Panc1 (cell line): ENCODE measurements at regions of chr12 and their contacts with region 1.

Region 1: GRCh38 chr12:91382081-91382543 is 199.5 kb upstream of the DCN start:
- DNase-seq: peak; percentile 53
- ATAC-seq: peak; percentile 82
- H3K4me3 ChIP-seq: peak overlapping the region; percentile 21 to 35
- H3K27ac ChIP-seq: no peak overlapping the region
- H3K4me1 ChIP-seq: peaks cover 3% of the 10 kb centered on the region; the same call in 1 of the 2 replicates
- H3K27me3 ChIP-seq: 0 out of 2 replicates have a peak, but pooled peaks cover 6% of the 10 kb centered on the region
- CTCF ChIP-seq: peak; percentile 88

Region 2: GRCh38 chr12:91094032-91094662 is 288.0 kb before region 1 on chr12:
- CTCF ChIA-PET with region 1: no interaction called
- POLR2A ChIA-PET with region 1: no interaction called
- in situ Hi-C with region 1: no loop called
- intact Hi-C with region 1: no loop called
- DNase-seq: no peak
- ATAC-seq: no peak
- H3K4me3 ChIP-seq: no peak overlapping the region
- H3K27ac ChIP-seq: no peak overlapping the region
- H3K4me1 ChIP-seq: no peaks in the 10 kb centered on the region
- H3K27me3 ChIP-seq: no peaks in the 10 kb centered on the region
- CTCF ChIP-seq: no peak

Region 3: DNA sequence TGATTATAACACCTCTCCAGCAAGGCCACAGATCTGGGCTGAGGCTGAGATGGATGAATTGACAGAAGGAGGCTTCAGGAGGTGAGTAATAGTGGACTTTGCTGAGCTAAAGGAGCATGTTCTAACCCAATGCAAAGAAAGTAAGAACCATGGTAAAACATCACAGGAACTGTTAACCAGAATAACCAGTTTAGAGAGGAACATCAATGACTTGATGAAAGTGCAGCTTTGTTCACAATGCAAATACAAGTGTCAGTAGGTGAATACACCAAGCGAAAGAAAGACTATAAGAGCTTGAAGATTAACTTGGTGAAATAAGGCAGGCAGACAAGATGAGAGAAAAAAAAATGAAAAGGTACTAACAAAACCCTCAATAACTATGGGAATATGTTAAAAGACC is 86.8 kb before region 1 on chr12:
- CTCF ChIA-PET with region 1: no interaction called
- POLR2A ChIA-PET with region 1: no interaction called
- in situ Hi-C with region 1: no loop called
- intact Hi-C with region 1: no loop called
- DNase-seq: no peak
- ATAC-seq: no peak
- H3K4me3 ChIP-seq: no peak overlapping the region
- H3K27ac ChIP-seq: no peak overlapping the region
- H3K4me1 ChIP-seq: no peaks in the 10 kb centered on the region
- H3K27me3 ChIP-seq: no peaks in the 10 kb centered on the region
- CTCF ChIP-seq: no peak

Region 4: DNA sequence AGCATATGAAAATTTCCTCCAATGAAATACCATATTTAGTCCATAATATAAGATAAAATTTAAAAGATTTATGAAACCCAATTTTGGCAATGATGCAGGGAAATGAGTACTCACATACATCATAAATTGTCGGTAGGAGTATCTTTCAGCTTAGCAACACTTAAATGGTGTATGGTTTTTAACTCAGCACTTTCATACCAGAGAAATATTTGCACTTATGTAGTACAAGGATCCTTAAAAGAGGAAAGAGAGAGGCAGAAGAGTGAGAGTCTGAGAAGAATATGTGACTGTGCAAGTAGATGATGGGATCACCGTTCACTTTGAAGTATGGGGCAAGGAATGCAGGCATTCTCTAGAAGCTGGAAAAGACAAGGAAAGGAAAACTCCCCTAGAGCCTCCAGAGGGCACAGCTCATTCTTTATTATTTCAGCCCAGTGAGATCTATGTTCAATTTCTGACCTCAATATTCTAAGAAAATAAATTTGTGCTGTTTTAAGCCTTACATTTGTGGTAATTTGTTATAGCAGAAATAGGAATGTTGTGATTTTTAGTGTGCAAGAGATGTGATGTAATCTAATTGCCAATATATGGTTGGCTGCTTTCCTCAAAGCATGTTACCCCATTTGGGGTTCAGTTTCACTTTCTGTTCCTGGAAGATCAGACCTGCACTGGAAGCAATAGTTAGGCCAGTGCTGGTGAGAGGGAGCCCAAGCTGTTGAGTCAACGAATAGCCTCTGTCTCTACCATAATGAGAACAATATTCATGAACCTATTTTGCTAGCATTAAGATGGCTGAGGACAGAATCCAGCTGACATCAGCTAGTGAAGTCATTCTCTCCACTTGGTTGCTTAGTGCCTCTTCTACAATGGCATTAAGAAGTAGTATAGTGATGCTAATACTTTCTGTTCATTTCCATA is 180.1 kb after region 1 on chr12:
- CTCF ChIA-PET with region 1: no interaction called
- POLR2A ChIA-PET with region 1: no interaction called
- in situ Hi-C with region 1: no loop called
- intact Hi-C with region 1: loop called (anchors 10 kb)
- DNase-seq: no peak
- ATAC-seq: no peak
- H3K4me3 ChIP-seq: no peak overlapping the region
- H3K27ac ChIP-seq: no peak overlapping the region
- H3K4me1 ChIP-seq: no peaks in the 10 kb centered on the region
- H3K27me3 ChIP-seq: no peaks in the 10 kb centered on the region
- CTCF ChIP-seq: peak; percentile 13; the same call in 1 of the 2 replicates

Region 5: GRCh38 chr12:92145731-92146496 is 763.8 kb after region 1 on chr12 and contains the start of gene BTG1:
- CTCF ChIA-PET with region 1: interaction called, 9 read pairs
- POLR2A ChIA-PET with region 1: no interaction called
- in situ Hi-C with region 1: no loop called
- intact Hi-C with region 1: loop called (anchors 1 kb)
- DNase-seq: peak; percentile 98
- ATAC-seq: peak; percentile 90
- H3K4me3 ChIP-seq: peak within 1 kb of the TSS; percentile 78 to 86
- H3K27ac ChIP-seq: peak within 1 kb of the TSS; percentile 85
- H3K4me1 ChIP-seq: peaks cover 27% of the 10 kb centered on the region
- H3K27me3 ChIP-seq: no peaks in the 10 kb centered on the region
- CTCF ChIP-seq: no peak
- total RNA-seq, gene BTG1: 50.0 TPM

Region 6: DNA sequence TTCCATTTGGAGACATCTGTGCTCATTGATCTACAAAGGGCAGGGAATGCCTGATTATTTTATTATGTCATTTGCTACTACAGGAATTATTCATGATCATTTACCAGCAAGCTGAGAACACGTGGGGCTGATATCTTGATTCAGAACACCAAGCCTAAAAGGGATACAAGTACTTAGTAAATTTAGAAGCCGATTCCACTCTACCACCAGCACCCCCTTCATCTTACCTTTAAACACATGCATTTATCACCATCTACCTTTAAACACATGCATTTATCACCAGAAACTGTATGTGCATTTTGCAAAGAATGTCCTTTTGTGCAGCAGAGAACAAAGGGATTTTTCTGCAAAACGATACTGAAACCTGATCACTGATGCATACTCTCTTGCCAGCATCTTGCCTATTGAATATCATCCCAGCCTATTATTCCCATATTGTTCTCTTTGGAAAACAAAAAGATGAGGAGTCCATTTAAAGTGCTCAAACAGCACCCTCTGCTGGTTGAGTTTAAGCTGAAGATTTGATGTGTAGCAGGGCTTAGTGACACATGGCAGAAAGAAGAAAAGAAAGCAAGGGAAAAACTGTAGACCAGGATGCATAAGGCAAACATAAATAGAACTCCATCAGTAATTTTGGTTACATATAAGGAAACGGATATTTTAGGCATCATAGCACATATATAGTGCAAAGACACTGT is 1188.1 kb after region 1 on chr12:
- CTCF ChIA-PET with region 1: interaction called, 3 read pairs
- POLR2A ChIA-PET with region 1: no interaction called
- in situ Hi-C with region 1: no loop called
- intact Hi-C with region 1: loop called (anchors 1 kb)
- DNase-seq: peak; percentile 41
- ATAC-seq: peak; percentile 80
- H3K4me3 ChIP-seq: no peak overlapping the region
- H3K27ac ChIP-seq: no peak overlapping the region
- H3K4me1 ChIP-seq: no peaks in the 10 kb centered on the region
- H3K27me3 ChIP-seq: 0 out of 2 replicates have a peak, but pooled peaks cover 2% of the 10 kb centered on the region
- CTCF ChIP-seq: peak; percentile 70

Region 7: DNA sequence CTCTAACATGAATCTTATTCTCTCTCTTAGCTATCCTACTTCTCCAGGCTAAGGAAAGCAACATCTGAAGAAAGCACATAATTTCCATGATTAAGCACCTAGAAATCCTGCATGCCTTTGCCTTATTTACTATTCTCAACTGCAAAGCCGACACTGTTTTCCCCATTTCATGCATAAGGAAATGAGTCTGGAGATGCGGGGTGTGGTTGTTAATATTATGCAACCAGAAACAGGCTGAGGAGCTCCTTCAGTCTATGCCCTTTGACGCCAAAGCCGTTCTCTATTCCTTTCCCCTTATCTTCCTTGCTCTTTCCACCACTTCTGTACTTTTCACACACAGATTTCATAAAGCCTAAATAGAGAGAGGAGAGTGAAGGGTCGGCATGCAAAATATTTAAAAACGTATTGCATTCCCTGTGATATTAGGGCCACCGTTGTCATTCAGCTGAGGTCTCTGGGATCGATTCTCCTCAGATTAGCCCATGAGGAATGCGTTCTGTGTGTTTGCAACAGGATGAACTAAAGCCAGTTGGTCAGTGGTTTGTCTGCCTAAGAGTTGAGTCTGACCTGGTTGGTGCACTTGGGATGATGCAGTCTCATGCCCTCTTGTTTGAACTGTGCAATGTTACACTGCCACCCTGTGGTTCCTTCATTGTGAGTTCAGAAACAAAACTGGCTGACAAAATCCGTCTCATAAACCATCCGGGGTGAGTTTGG is 1267.6 kb after region 1 on chr12:
- CTCF ChIA-PET with region 1: interaction called, 4 read pairs
- POLR2A ChIA-PET with region 1: no interaction called
- in situ Hi-C with region 1: no loop called
- intact Hi-C with region 1: loop called (anchors 5 kb)
- DNase-seq: peak; percentile 61
- ATAC-seq: peak; percentile 95
- H3K4me3 ChIP-seq: no peak overlapping the region
- H3K27ac ChIP-seq: no peak overlapping the region
- H3K4me1 ChIP-seq: no peaks in the 10 kb centered on the region
- H3K27me3 ChIP-seq: peaks cover 4% of the 10 kb centered on the region; the same call in 1 of the 2 replicates
- CTCF ChIP-seq: peak; percentile 80